ENCODE measurements at regions of chr9 and their contacts with region 1.

Region 1: GRCh38 chr9:97966493-97966892 is 16.6 kb upstream of the ANP32B start:
- DNase-seq: no peak
- H3K4me3 ChIP-seq: no peak overlapping the region
- H3K4me3 Mint-ChIP-seq: no peak overlapping the region
- H3K27ac ChIP-seq: no peak overlapping the region
- H3K27ac Mint-ChIP-seq: no peak overlapping the region
- H3K4me1 ChIP-seq: no peaks in the 10 kb centered on the region
- H3K4me1 Mint-ChIP-seq: no peaks in the 10 kb centered on the region
- H3K27me3 ChIP-seq: no peaks in the 10 kb centered on the region
- H3K27me3 Mint-ChIP-seq: peaks cover 15 to 20% of the 10 kb centered on the region in 2 donors

Region 2: DNA sequence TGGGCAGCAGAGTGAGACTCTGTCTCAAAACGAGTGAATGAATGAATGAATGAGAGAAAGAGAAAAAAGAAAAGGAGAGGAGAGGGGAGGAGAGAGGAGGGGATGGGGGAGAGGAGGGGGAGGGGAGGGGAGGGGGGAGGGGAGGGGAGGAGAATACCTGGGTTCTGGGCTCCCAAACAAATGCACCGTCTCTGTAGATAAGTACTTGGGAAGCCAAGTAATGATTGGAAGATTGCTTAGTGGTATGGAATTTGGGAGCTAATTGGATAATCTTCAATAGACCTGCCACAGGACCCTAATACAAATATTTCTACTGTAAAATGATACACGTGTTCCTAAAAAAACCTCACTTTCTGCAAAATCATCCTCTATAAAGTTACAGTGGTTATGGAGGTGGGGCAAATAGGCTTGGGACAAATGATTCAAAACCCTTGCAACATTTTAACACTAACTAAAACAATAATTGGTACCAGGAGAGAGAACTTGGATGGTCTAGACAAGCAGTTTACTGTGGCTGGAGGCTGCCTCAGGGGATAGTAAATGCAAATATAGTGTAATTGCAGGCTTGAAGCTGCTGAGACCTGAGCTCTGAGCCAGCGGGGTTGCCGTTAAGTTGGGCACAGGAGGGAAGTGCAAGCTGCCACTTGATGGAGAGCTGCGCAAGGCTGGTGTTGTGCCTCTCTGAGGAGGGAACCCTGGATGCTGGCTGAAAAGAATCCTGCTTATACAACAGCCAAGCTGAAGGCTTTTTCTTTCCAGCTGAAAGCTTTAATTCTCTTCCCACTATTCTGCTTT is 32.0 kb before region 1 on chr9:
- CTCF ChIA-PET with region 1: no interaction called
- POLR2A ChIA-PET with region 1: no interaction called
- DNase-seq: no peak
- H3K4me3 ChIP-seq: no peak overlapping the region
- H3K4me3 Mint-ChIP-seq: no peak overlapping the region
- H3K27ac ChIP-seq: peak overlapping the region; percentile 28
- H3K27ac Mint-ChIP-seq: no peak overlapping the region
- H3K4me1 ChIP-seq: peaks cover 57% of the 10 kb centered on the region
- H3K4me1 Mint-ChIP-seq: peaks cover 37 to 52% (median 47%) of the 10 kb centered on the region in 3 donors
- H3K27me3 ChIP-seq: no peaks in the 10 kb centered on the region
- H3K27me3 Mint-ChIP-seq: no peaks in the 10 kb centered on the region

Region 3: GRCh38 chr9:98002808-98003207 is 36.3 kb after region 1 on chr9:
- CTCF ChIA-PET with region 1: no interaction called
- POLR2A ChIA-PET with region 1: interaction called, 11 read pairs
- DNase-seq: no peak
- H3K4me3 ChIP-seq: no peak overlapping the region
- H3K4me3 Mint-ChIP-seq: no peak overlapping the region
- H3K27ac ChIP-seq: no peak overlapping the region
- H3K27ac Mint-ChIP-seq: peak overlapping the region in 4 of 8 donors; percentile 34 to 72 (median 49)
- H3K4me1 ChIP-seq: no peaks in the 10 kb centered on the region
- H3K4me1 Mint-ChIP-seq: peaks cover 22 to 56% (median 37%) of the 10 kb centered on the region in 3 donors
- H3K27me3 ChIP-seq: no peaks in the 10 kb centered on the region
- H3K27me3 Mint-ChIP-seq: no peaks in the 10 kb centered on the region